WTC11 (cell line): ENCODE measurements at regions of chr6 and their contacts with region 1.

Region 1: GRCh38 chr6:57172136-57173055 is at the start of gene BAG2:
- DNase-seq: peak; percentile 88
- ATAC-seq: peak; percentile 84
- H3K4me3 Mint-ChIP-seq: peak within 1 kb of the TSS; percentile 87
- H3K27ac Mint-ChIP-seq: peak within 1 kb of the TSS; percentile 87
- H3K4me1 Mint-ChIP-seq: peaks cover 42% of the 10 kb centered on the region
- H3K27me3 Mint-ChIP-seq: peaks cover 5% of the 10 kb centered on the region; the same call in 1 of the 2 replicates
- CTCF ChIP-seq: no peak
- total RNA-seq, gene BAG2: 7.5 to 8.0 TPM (median 8.0 TPM) in 3 replicates

Region 2: DNA sequence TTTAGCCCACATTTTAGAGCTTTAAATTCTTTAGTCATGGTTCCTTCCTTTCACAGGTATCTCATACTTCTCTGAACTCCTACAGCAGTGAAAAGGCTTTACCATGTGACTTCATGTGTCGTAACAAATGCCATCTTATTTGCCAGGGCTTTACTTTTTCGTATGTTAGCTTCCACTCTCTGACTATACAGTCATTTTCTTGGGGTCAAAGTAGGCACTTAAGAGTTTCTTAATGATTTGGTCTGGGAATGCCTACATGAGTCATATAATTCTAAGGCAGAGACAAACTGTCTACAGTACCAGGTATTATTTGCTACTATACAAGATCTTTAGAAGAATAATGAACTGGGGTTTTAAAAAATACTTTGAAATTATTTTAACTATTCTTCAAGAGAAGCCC is 34.7 kb after region 1 on chr6:
- CTCF ChIA-PET with region 1: no interaction called
- POLR2A ChIA-PET with region 1: no interaction called
- DNase-seq: no peak
- ATAC-seq: no peak
- H3K4me3 Mint-ChIP-seq: no peak overlapping the region
- H3K27ac Mint-ChIP-seq: no peak overlapping the region
- H3K4me1 Mint-ChIP-seq: peaks cover 15% of the 10 kb centered on the region
- H3K27me3 Mint-ChIP-seq: no peaks in the 10 kb centered on the region
- CTCF ChIP-seq: no peak

Region 3: GRCh38 chr6:57221936-57222742 is 49.7 kb after region 1 on chr6 and contains the start of gene RAB23:
- CTCF ChIA-PET with region 1: no interaction called
- POLR2A ChIA-PET with region 1: interaction called, 22 read pairs
- DNase-seq: peak; percentile 89
- ATAC-seq: peak; percentile 78
- H3K4me3 Mint-ChIP-seq: peak within 1 kb of the TSS; percentile 94
- H3K27ac Mint-ChIP-seq: peak within 1 kb of the TSS; percentile 100
- H3K4me1 Mint-ChIP-seq: peaks cover 49% of the 10 kb centered on the region
- H3K27me3 Mint-ChIP-seq: no peaks in the 10 kb centered on the region
- CTCF ChIP-seq: no peak
- total RNA-seq, gene RAB23: 11.3 to 14.8 TPM (median 14.5 TPM) in 3 replicates

Region 4: DNA sequence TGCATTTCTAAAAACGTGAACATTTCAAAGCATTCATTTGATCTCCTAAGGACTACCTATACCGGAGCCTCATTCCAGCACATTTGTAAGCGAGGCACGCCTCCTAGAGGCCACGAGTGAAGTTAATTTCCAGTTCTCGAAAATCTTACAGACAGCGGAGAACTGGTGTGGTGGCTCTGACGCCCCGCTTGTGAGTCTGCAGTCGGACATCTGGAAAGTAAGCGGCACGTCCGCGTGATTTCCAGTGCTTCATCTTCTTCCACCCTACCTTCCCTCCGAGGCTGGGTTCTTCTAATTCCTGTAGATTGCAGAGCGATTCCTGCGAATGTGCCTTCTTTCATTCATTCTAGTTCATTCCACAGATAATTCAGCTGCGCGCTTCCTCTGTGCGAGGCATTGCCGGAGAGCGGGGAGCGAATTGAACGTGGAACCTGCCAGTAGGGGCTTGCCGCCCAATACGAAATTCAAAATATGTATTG is 144.2 kb after region 1 on chr6:
- CTCF ChIA-PET with region 1: interaction called, 10 read pairs
- POLR2A ChIA-PET with region 1: interaction called, 3 read pairs
- DNase-seq: peak; percentile 82
- ATAC-seq: peak; percentile 88
- H3K4me3 Mint-ChIP-seq: peak overlapping the region; percentile 100
- H3K27ac Mint-ChIP-seq: peak overlapping the region; percentile 95
- H3K4me1 Mint-ChIP-seq: peaks cover 12% of the 10 kb centered on the region
- H3K27me3 Mint-ChIP-seq: no peaks in the 10 kb centered on the region
- CTCF ChIP-seq: peak; percentile 53